AG04449 (cell line): ENCODE measurements at regions of chr19 and their contacts with region 1.

Region 1: GRCh38 chr19:46311444-46311843 is 14.6 kb downstream of the HIF3A start:
- DNase-seq: no peak
- H3K4me3 ChIP-seq: no peak overlapping the region
- CTCF ChIP-seq: no peak

Region 2: GRCh38 chr19:46271481-46272197 is 39.8 kb before region 1 on chr19:
- CTCF ChIA-PET with region 1: no interaction called
- POLR2A ChIA-PET with region 1: no interaction called
- DNase-seq: peak; percentile 55
- H3K4me3 ChIP-seq: no peak overlapping the region
- CTCF ChIP-seq: no peak

Region 3: DNA sequence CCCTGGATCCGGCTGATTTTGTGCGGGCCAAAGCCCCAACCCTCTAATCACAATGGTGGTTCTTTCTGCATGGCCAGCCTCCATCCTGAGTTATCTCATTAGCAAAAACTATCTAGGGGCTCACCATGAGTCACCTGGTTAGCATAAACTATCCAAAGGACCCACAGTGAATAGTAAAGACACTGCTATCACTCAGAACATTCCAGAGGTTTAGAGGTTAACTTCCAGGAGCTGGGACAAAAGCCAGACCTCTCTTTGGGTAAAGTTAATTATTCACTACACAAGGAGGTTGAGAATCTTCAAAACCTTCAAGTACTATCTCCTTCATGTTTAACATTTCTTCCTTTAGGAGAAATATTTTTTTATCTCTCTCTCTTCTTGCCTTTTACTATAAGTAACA is 16.6 kb after region 1 on chr19:
- CTCF ChIA-PET with region 1: no interaction called
- POLR2A ChIA-PET with region 1: no interaction called
- DNase-seq: no peak
- H3K4me3 ChIP-seq: no peak overlapping the region
- CTCF ChIP-seq: no peak

Region 4: GRCh38 chr19:46346821-46347571 is 35.6 kb after region 1 on chr19 and contains the start of gene PPP5C:
- CTCF ChIA-PET with region 1: interaction called, 10 read pairs
- POLR2A ChIA-PET with region 1: interaction called, 3 read pairs
- DNase-seq: peak; percentile 21
- H3K4me3 ChIP-seq: peak within 1 kb of the TSS; percentile 99
- CTCF ChIP-seq: peak; percentile 95